WTC11 (cell line): ENCODE measurements at regions of chr3 and their contacts with region 1.

Region 1: GRCh38 chr3:9111866-9112265 is 137.6 kb downstream of the SRGAP3 start:
- DNase-seq: no peak
- ATAC-seq: peak; percentile 23
- H3K4me3 Mint-ChIP-seq: no peak overlapping the region
- H3K27ac Mint-ChIP-seq: no peak overlapping the region
- H3K4me1 Mint-ChIP-seq: peaks cover 7% of the 10 kb centered on the region
- H3K27me3 Mint-ChIP-seq: no peaks in the 10 kb centered on the region
- CTCF ChIP-seq: no peak

Region 2: DNA sequence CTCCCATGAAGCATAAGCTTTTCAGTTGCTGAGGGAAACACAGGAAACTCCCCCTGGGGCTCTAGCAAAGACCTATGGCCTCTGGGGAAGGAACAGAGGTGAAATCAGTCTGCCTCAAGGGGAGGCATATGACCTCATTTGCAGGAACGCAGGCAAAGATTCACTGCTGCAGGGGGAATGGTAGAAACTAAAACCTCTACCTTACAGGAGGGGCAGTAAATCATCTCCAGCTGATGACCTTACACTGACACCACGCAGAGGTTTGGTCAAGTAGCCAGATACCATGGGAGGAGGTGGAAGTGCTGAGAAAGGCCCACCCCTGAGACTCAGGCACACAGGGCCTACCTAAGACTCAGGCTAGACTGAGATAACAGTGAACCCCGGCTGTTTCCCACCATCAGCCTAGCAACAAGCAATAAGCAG is 229.7 kb before region 1 on chr3:
- CTCF ChIA-PET with region 1: no interaction called
- POLR2A ChIA-PET with region 1: no interaction called
- DNase-seq: no peak
- ATAC-seq: peak; percentile 87
- H3K4me3 Mint-ChIP-seq: no peak overlapping the region
- H3K27ac Mint-ChIP-seq: peak overlapping the region; percentile 94
- H3K4me1 Mint-ChIP-seq: peaks cover 17% of the 10 kb centered on the region
- H3K27me3 Mint-ChIP-seq: no peaks in the 10 kb centered on the region
- CTCF ChIP-seq: no peak

Region 3: GRCh38 chr3:9067352-9067975 is 44.4 kb before region 1 on chr3:
- CTCF ChIA-PET with region 1: no interaction called
- POLR2A ChIA-PET with region 1: no interaction called
- DNase-seq: peak; percentile 66
- ATAC-seq: peak; percentile 94
- H3K4me3 Mint-ChIP-seq: no peak overlapping the region
- H3K27ac Mint-ChIP-seq: no peak overlapping the region
- H3K4me1 Mint-ChIP-seq: no peaks in the 10 kb centered on the region
- H3K27me3 Mint-ChIP-seq: no peaks in the 10 kb centered on the region; the same call in 1 of the 2 replicates
- CTCF ChIP-seq: peak; percentile 72

Region 4: DNA sequence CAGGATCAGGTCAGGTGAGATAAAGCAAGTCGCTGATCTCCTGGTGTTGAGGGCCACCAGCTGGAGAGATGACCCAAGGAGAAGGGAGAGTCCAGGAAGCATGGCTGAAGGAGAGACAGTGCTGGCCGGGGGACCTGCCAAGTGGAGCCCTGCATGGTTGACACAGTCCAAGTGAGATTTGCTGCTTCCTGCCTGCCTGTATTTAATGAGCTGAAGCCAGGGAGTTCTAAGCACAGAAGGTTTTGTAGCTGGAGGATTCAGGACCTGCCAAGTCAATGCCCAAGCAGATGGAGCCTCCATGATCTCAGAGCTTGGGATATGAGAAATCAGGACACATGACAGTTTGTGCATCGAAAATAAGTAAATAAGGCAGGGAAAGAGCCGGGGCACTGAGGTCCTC is 12.0 kb after region 1 on chr3:
- CTCF ChIA-PET with region 1: interaction called, 17 read pairs
- POLR2A ChIA-PET with region 1: no interaction called
- DNase-seq: no peak
- ATAC-seq: no peak
- H3K4me3 Mint-ChIP-seq: no peak overlapping the region
- H3K27ac Mint-ChIP-seq: no peak overlapping the region
- H3K4me1 Mint-ChIP-seq: peaks cover 19% of the 10 kb centered on the region
- H3K27me3 Mint-ChIP-seq: no peaks in the 10 kb centered on the region
- CTCF ChIP-seq: no peak